Endothelial cell of umbilical vein (primary cell): ENCODE measurements at regions of chr3 and their contacts with region 1.

Region 1: DNA sequence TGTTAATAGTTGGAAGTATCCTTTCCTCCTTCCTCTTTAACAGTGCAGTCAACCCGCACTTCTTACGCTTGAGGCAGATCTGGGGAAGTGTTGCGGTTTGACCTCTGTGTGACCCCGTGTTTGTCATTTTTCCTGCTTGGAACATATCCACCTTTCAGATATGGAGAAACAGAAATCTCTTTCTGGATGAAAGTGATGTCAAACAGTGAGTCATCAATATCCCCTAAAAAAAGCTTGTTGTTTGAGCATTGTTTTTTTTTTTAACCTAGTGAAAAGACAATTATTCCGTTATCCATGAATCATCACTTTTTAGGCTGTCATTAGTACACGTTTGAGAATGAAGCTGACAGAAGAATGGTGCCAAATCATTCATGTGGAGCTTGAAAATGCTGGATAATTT is 293.7 kb downstream of the ARPP21 start:
- DNase-seq: peak; percentile 99
- H3K4me3 ChIP-seq: no peak overlapping the region
- H3K27ac ChIP-seq: peak overlapping the region; percentile 71
- H3K4me1 ChIP-seq: peaks cover 53% of the 10 kb centered on the region
- H3K27me3 ChIP-seq: no peaks in the 10 kb centered on the region
- CTCF ChIP-seq: no peak
- POLR2A ChIP-seq: no peak

Region 2: GRCh38 chr3:34207002-34207401 is 1726.0 kb before region 1 on chr3:
- CTCF ChIA-PET with region 1: no interaction called
- POLR2A ChIA-PET with region 1: no interaction called
- dilution Hi-C with region 1: no loop called
- intact Hi-C with region 1: loop called (anchors 5 kb)
- DNase-seq: peak; percentile 92
- H3K4me3 ChIP-seq: no peak overlapping the region
- H3K27ac ChIP-seq: peak overlapping the region; percentile 59
- H3K4me1 ChIP-seq: peaks cover 42% of the 10 kb centered on the region
- H3K27me3 ChIP-seq: no peaks in the 10 kb centered on the region
- CTCF ChIP-seq: no peak
- POLR2A ChIP-seq: peak; percentile 18

Region 3: DNA sequence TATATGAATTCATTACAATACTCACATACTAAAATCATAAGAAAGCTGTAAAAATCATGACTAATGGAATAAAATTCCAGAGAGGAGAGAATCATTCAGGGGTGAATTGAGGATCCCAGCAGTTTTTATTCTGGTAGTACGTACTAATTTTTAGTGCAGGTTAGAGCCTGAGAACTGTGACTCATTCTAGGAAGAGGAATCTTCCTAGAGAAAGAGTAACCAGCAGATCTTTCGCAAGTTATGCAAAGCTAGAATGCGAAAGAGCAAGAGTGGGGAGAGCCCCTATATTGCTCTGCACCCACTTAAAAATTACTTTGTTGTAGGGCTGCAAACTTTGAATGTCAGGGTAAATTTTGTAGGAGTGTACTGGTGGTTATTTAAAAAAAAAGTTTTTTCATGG is 597.3 kb before region 1 on chr3:
- CTCF ChIA-PET with region 1: no interaction called
- POLR2A ChIA-PET with region 1: no interaction called
- dilution Hi-C with region 1: no loop called
- intact Hi-C with region 1: loop called (anchors 5 kb)
- DNase-seq: no peak
- H3K4me3 ChIP-seq: no peak overlapping the region
- H3K27ac ChIP-seq: no peak overlapping the region
- H3K4me1 ChIP-seq: peaks cover 13% of the 10 kb centered on the region
- H3K27me3 ChIP-seq: no peaks in the 10 kb centered on the region
- CTCF ChIP-seq: no peak
- POLR2A ChIP-seq: no peak

Region 4: DNA sequence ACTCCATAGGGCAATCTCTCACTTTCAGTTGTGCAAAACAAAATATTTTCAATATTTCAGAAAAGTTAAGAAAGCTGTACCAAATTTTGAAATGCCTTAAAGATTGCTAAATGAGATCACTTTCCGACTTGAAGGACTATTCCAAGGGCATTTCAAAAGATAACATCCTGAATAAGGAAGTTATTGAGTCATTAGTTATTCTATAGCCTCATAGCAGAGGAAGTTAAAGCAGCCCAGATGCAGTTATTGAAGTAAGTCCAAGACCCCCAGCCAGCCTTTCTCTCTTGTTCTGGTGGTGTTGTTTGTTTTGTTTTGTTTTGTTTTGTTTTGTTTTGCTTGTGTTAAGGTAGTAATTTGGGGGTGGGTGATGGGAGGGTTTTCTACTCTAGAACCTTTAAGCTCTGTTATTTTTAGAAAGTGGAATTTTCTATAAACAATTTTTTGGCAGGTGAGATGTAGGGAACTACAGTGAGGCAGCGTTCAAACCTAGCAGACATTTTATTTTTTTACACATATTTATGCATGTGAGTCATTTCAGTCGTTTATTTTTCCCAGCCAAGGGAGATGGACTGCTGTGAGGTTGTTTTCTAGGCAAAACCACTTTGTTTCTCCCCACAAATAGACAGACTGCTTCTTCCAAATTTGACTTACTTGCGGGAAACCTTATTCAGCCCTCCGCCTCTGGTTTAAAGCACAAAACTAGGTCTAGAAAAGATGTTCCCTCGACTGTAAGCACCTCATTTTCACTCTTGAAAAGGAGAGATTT is 510.0 kb before region 1 on chr3:
- CTCF ChIA-PET with region 1: interaction called, 4 read pairs
- POLR2A ChIA-PET with region 1: no interaction called
- dilution Hi-C with region 1: no loop called
- intact Hi-C with region 1: loop called (anchors 1 kb)
- DNase-seq: peak; percentile 81
- H3K4me3 ChIP-seq: peak overlapping the region in 1 of 3 experiments; percentile 18
- H3K27ac ChIP-seq: peak overlapping the region; percentile 32
- H3K4me1 ChIP-seq: peaks cover 16% of the 10 kb centered on the region
- H3K27me3 ChIP-seq: peaks cover 18 to 20% of the 10 kb centered on the region in 2 experiments
- CTCF ChIP-seq: no peak
- POLR2A ChIP-seq: no peak

Region 5: GRCh38 chr3:35664460-35664919 is 268.5 kb before region 1 on chr3:
- CTCF ChIA-PET with region 1: no interaction called
- POLR2A ChIA-PET with region 1: no interaction called
- dilution Hi-C with region 1: no loop called
- intact Hi-C with region 1: loop called (anchors 1 kb)
- DNase-seq: peak; percentile 86
- H3K4me3 ChIP-seq: no peak overlapping the region
- H3K27ac ChIP-seq: no peak overlapping the region
- H3K4me1 ChIP-seq: peaks cover 25% of the 10 kb centered on the region
- H3K27me3 ChIP-seq: no peaks in the 10 kb centered on the region
- CTCF ChIP-seq: no peak
- POLR2A ChIP-seq: no peak

Region 6: DNA sequence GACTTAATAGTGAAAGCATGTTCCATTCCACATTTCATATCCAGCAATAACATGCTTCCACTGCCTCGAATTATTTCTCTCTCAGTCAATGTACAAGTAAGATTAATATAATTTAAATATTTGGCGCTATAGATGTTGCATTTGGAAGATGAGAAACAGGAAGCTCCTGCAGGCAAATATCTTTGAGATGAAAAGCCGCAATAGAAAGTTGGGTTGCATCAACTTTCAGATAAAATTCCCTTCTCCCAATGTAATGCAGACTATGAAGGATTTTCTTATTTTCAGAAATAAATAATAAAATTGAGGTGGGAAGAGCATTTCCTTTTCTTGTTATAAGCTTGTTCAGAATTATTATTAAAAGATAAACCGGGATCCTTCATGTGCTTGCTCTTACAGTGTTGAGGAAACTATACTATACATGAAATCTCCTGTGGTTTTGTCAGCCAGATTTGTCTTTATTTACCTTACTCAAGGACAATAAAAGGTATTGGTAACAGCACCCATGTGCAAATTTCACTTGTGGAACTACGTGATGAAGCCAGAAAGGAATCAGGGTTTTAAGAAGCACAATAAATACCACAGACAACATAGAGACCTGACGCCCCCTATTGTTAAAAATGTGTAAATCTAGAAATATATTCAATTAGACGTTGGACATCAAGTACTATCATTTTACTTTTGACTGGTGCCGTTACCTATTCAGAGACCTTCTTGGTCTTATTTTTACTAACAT is 13.3 kb after region 1 on chr3:
- CTCF ChIA-PET with region 1: interaction called, 26 read pairs
- POLR2A ChIA-PET with region 1: no interaction called
- dilution Hi-C with region 1: no loop called
- intact Hi-C with region 1: loop called (anchors 1 kb)
- DNase-seq: peak; percentile 59
- H3K4me3 ChIP-seq: no peak overlapping the region
- H3K27ac ChIP-seq: no peak overlapping the region
- H3K4me1 ChIP-seq: peaks cover 10% of the 10 kb centered on the region
- H3K27me3 ChIP-seq: peaks cover 5 to 11% of the 10 kb centered on the region in 2 experiments
- CTCF ChIP-seq: peak; percentile 20 to 50
- POLR2A ChIP-seq: no peak